GM12878 (cell line): ENCODE measurements at regions of chr7 and their contacts with region 1.

Region 1: GRCh38 chr7:39353615-39354376 is 212.4 kb upstream of the YAE1 start:
- DNase-seq: no peak
- ATAC-seq: no peak
- H3K4me3 ChIP-seq: no peak overlapping the region
- H3K27ac ChIP-seq: no peak overlapping the region
- H3K4me1 ChIP-seq: no peaks in the 10 kb centered on the region
- H3K27me3 ChIP-seq: no peaks in the 10 kb centered on the region
- CTCF ChIP-seq: no peak
- EP300 ChIP-seq: no peak
- POLR2A ChIP-seq: no peak
- RAD21 ChIP-seq: no peak

Region 2: GRCh38 chr7:39153647-39154046 is 200.1 kb before region 1 on chr7:
- CTCF ChIA-PET with region 1: no interaction called
- POLR2A ChIA-PET with region 1: no interaction called
- RAD21 ChIA-PET with region 1: no interaction called
- SMC1A ChIA-PET with region 1: no interaction called
- in situ Hi-C with region 1: no loop called
- intact Hi-C with region 1: no loop called
- DNase-seq: no peak
- ATAC-seq: no peak
- H3K4me3 ChIP-seq: no peak overlapping the region
- H3K27ac ChIP-seq: no peak overlapping the region
- H3K4me1 ChIP-seq: no peaks in the 10 kb centered on the region
- H3K27me3 ChIP-seq: no peaks in the 10 kb centered on the region
- CTCF ChIP-seq: no peak
- EP300 ChIP-seq: no peak
- POLR2A ChIP-seq: no peak
- RAD21 ChIP-seq: no peak

Region 3: DNA sequence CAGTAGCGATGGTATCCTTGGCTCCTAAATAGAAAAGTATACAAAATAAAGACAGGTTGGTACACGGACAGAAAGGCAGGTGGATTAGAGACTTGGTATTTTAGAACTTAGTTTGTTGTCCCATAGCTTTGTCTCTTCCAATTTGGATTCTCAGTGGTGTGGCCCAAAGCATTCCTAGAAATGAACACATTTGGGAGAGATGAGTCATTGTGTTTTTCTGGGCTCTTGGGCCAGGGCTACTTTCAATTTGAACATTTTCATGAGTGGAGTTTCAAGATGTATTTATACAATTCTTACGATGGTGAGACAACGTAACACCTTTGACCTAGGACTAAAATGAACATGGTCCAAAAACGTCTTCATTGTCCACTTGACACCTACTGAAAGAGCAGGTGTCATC is 12.7 kb before region 1 on chr7:
- CTCF ChIA-PET with region 1: interaction called, 3 read pairs
- POLR2A ChIA-PET with region 1: no interaction called
- RAD21 ChIA-PET with region 1: no interaction called
- SMC1A ChIA-PET with region 1: interaction called, 11 read pairs
- in situ Hi-C with region 1: no loop called
- intact Hi-C with region 1: no loop called
- DNase-seq: no peak
- ATAC-seq: no peak
- H3K4me3 ChIP-seq: no peak overlapping the region
- H3K27ac ChIP-seq: no peak overlapping the region
- H3K4me1 ChIP-seq: no peaks in the 10 kb centered on the region
- H3K27me3 ChIP-seq: no peaks in the 10 kb centered on the region
- CTCF ChIP-seq: no peak
- EP300 ChIP-seq: no peak
- POLR2A ChIP-seq: no peak
- RAD21 ChIP-seq: no peak

Region 4: DNA sequence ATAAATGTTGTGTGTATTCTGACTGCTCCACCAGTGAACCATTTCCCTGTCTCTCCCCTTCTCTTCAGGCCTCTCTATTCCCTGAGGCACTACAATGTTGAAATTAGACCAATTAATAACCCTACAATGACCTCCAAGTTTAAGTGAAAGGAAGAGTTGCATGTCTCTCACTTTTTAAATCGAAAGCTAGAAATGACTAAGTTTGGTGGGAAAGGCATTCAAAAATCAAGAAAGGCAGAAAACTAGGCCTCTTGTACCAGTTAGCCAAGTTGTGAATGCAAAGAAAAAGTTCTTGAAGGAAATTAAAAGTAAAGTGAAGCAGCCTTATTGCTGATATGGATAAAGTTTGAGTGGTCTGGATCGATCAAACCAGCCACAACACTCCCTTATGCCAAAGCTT is 14.1 kb after region 1 on chr7:
- CTCF ChIA-PET with region 1: interaction called, 10 read pairs
- POLR2A ChIA-PET with region 1: interaction called, 4 read pairs
- RAD21 ChIA-PET with region 1: interaction called, 4 read pairs
- SMC1A ChIA-PET with region 1: interaction called, 3 read pairs
- in situ Hi-C with region 1: no loop called
- intact Hi-C with region 1: no loop called
- DNase-seq: no peak
- ATAC-seq: peak; percentile 61
- H3K4me3 ChIP-seq: no peak overlapping the region
- H3K27ac ChIP-seq: no peak overlapping the region
- H3K4me1 ChIP-seq: no peaks in the 10 kb centered on the region
- H3K27me3 ChIP-seq: no peaks in the 10 kb centered on the region; a peak in 1 of 4 replicates
- CTCF ChIP-seq: no peak
- EP300 ChIP-seq: no peak
- POLR2A ChIP-seq: no peak
- RAD21 ChIP-seq: no peak

Region 5: GRCh38 chr7:39407137-39407536 is 53.3 kb after region 1 on chr7:
- CTCF ChIA-PET with region 1: no interaction called
- POLR2A ChIA-PET with region 1: no interaction called
- RAD21 ChIA-PET with region 1: no interaction called
- SMC1A ChIA-PET with region 1: interaction called, 8 read pairs
- in situ Hi-C with region 1: no loop called
- intact Hi-C with region 1: loop called (anchors 5 kb)
- DNase-seq: no peak
- ATAC-seq: no peak
- H3K4me3 ChIP-seq: no peak overlapping the region
- H3K27ac ChIP-seq: no peak overlapping the region
- H3K4me1 ChIP-seq: no peaks in the 10 kb centered on the region
- H3K27me3 ChIP-seq: no peaks in the 10 kb centered on the region
- CTCF ChIP-seq: no peak
- EP300 ChIP-seq: no peak
- POLR2A ChIP-seq: no peak
- RAD21 ChIP-seq: no peak

Region 6: GRCh38 chr7:39946693-39947092 is 592.9 kb after region 1 on chr7:
- CTCF ChIA-PET with region 1: no interaction called
- POLR2A ChIA-PET with region 1: no interaction called
- RAD21 ChIA-PET with region 1: no interaction called
- SMC1A ChIA-PET with region 1: no interaction called
- in situ Hi-C with region 1: no loop called
- intact Hi-C with region 1: no loop called
- DNase-seq: no peak
- ATAC-seq: no peak
- H3K4me3 ChIP-seq: no peak overlapping the region
- H3K27ac ChIP-seq: no peak overlapping the region
- H3K4me1 ChIP-seq: peaks cover 9% of the 10 kb centered on the region; the same call in 1 of the 2 replicates
- H3K27me3 ChIP-seq: no peaks in the 10 kb centered on the region
- CTCF ChIP-seq: no peak
- EP300 ChIP-seq: no peak
- POLR2A ChIP-seq: no peak
- RAD21 ChIP-seq: no peak